ENCODE measurements at regions of chr2 and their contacts with region 1.

Region 1: GRCh38 chr2:190853531-190854383 is 26.9 kb upstream of the GLS start:
- DNase-seq: peak; percentile 54
- H3K4me3 ChIP-seq: no peak overlapping the region
- H3K27ac ChIP-seq: no peak overlapping the region
- H3K4me1 ChIP-seq: peaks cover 9% of the 10 kb centered on the region
- H3K27me3 ChIP-seq: no peaks in the 10 kb centered on the region
- CTCF ChIP-seq: no peak
- POLR2A ChIP-seq: no peak

Region 2: DNA sequence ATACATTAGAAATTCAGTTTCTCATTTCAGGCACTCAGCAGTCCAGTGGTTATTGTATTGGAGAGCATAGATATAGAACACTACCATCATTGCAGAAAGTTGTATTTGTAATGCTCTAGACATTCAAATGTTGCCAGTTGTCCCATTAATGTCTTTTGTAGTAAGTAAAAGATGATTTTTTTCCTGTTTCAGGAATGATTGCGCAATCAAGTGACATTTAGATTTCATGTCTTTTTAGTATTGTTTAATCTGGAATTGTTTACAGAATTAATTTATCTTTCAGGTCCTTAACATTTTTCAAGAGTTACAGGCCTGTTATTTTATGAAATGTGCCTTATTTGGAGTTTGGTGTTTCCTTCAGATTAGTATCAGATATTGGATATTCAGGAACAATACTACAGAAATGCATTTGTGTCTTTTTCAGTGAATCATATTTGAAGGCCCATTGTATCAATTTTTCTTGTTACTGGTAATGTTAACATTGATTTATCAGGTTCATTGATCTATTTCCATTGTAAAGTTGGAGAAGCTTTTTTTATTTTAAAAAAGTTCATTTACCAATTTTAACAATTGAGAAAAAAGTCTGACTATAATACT is 925.8 kb before region 1 on chr2:
- CTCF ChIA-PET with region 1: no interaction called
- POLR2A ChIA-PET with region 1: no interaction called
- dilution Hi-C with region 1: no loop called
- intact Hi-C with region 1: no loop called
- DNase-seq: no peak
- H3K4me3 ChIP-seq: no peak overlapping the region
- H3K27ac ChIP-seq: no peak overlapping the region
- H3K4me1 ChIP-seq: no peaks in the 10 kb centered on the region
- H3K27me3 ChIP-seq: no peaks in the 10 kb centered on the region
- CTCF ChIP-seq: no peak
- POLR2A ChIP-seq: no peak

Region 3: DNA sequence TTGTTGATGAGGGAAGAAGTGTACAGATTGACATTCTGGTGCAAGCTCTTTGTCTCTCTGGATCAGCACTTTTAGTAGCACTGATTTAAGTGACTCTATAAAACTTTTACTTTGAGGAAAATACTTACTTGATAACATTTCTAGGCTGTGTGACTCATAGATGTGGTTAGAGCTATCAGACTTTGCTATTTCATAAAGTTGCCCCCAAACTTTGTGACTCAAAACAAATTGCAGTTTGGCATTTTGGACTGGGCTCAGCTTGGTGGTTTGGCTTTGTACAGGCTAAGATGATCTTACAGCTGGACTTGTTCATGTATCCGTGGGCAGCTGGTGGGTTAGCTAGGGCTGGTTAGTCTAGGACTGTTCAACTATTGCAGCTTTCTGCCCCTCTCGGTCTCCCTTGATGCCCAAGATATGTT is 15.3 kb before region 1 on chr2:
- CTCF ChIA-PET with region 1: interaction called, 23 read pairs
- POLR2A ChIA-PET with region 1: no interaction called
- dilution Hi-C with region 1: no loop called
- intact Hi-C with region 1: no loop called
- DNase-seq: no peak
- H3K4me3 ChIP-seq: no peak overlapping the region
- H3K27ac ChIP-seq: no peak overlapping the region
- H3K4me1 ChIP-seq: peaks cover 16% of the 10 kb centered on the region
- H3K27me3 ChIP-seq: no peaks in the 10 kb centered on the region
- CTCF ChIP-seq: no peak
- POLR2A ChIP-seq: no peak

Region 4: DNA sequence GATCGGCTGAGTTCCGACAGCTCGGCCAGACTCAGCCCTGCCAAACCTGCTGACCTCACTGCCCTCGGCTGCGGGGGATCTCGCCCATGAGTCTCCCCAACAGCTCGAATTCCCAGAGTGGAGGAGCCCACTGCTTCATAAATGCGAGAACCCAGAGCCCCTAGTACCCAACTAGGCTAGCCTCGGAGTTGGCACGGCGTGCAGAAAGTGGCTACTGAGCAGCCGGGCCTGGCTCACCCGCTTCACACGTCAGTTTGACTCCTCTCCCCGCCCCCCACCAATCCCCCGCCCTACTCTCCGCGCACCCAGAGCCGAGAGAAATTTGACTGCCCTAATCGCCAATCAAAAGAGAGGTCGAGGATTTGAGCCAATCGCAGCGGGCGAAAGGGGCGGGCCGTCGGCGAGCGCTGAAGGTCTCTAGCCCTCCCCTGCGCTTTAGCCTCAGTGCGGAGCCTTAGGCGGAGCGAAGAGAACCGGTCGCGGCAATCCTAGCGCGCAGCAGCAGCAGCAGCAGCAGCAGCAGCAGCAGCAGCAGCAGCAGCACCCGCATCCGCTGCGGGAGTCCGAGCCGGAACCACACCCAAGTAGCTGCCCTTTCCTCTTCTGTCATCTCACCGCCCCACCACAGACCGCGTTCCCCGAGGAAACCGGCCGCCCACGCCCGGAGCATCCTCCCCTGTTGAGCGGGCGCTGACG is 26.8 kb after region 1 on chr2 and contains the start of gene GLS:
- CTCF ChIA-PET with region 1: interaction called, 50 read pairs
- POLR2A ChIA-PET with region 1: interaction called, 7 read pairs
- dilution Hi-C with region 1: no loop called
- intact Hi-C with region 1: loop called (anchors 1 kb)
- DNase-seq: peak; percentile 98
- H3K4me3 ChIP-seq: peak within 1 kb of the TSS; percentile 80 to 99 (median 98)
- H3K27ac ChIP-seq: peak within 1 kb of the TSS; percentile 83
- H3K4me1 ChIP-seq: peaks cover 32% of the 10 kb centered on the region
- H3K27me3 ChIP-seq: no peaks in the 10 kb centered on the region
- CTCF ChIP-seq: no peak
- POLR2A ChIP-seq: peak; percentile 99
- total RNA-seq, gene GLS: 181 and 183 TPM in 2 replicates

Region 5: GRCh38 chr2:190887089-190887488 is 33.3 kb after region 1 on chr2:
- CTCF ChIA-PET with region 1: interaction called, 50 read pairs
- POLR2A ChIA-PET with region 1: interaction called, 7 read pairs
- dilution Hi-C with region 1: no loop called
- intact Hi-C with region 1: no loop called
- DNase-seq: peak; percentile 30
- H3K4me3 ChIP-seq: no peak overlapping the region
- H3K27ac ChIP-seq: no peak overlapping the region
- H3K4me1 ChIP-seq: peaks cover 52% of the 10 kb centered on the region
- H3K27me3 ChIP-seq: no peaks in the 10 kb centered on the region
- CTCF ChIP-seq: no peak
- POLR2A ChIP-seq: no peak

Region 6: GRCh38 chr2:190947711-190948251 is 94.0 kb after region 1 on chr2:
- CTCF ChIA-PET with region 1: interaction called, 10 read pairs
- POLR2A ChIA-PET with region 1: no interaction called
- dilution Hi-C with region 1: no loop called
- intact Hi-C with region 1: loop called (anchors 5 kb)
- DNase-seq: peak; percentile 93
- H3K4me3 ChIP-seq: peak overlapping the region in 1 of 3 experiments; percentile 33
- H3K27ac ChIP-seq: peak overlapping the region; percentile 78
- H3K4me1 ChIP-seq: peaks cover 31% of the 10 kb centered on the region
- H3K27me3 ChIP-seq: no peaks in the 10 kb centered on the region
- CTCF ChIP-seq: no peak
- POLR2A ChIP-seq: peak; percentile 29

Region 7: GRCh38 chr2:191280304-191280703 is 426.5 kb after region 1 on chr2:
- CTCF ChIA-PET with region 1: no interaction called
- POLR2A ChIA-PET with region 1: no interaction called
- dilution Hi-C with region 1: no loop called
- intact Hi-C with region 1: no loop called
- DNase-seq: no peak
- H3K4me3 ChIP-seq: no peak overlapping the region
- H3K27ac ChIP-seq: no peak overlapping the region
- H3K4me1 ChIP-seq: no peaks in the 10 kb centered on the region
- H3K27me3 ChIP-seq: no peaks in the 10 kb centered on the region
- CTCF ChIP-seq: no peak
- POLR2A ChIP-seq: no peak

Measured in endothelial cell of umbilical vein (primary cell).